Tibial artery (tissue), 4 donors: ENCODE measurements at regions of chr17 and their contacts with region 1.

Region 1: GRCh38 chr17:38799378-38800236 is at the start of gene PIP4K2B:
- DNase-seq: peak; percentile 96 to 99
- H3K4me3 ChIP-seq: peak within 1 kb of the TSS; percentile 95 to 97
- H3K27ac ChIP-seq: peak within 1 kb of the TSS; percentile 98
- H3K4me1 ChIP-seq: peaks cover 0 to 37% (median 31%) of the 10 kb centered on the region in 4 donors
- H3K27me3 ChIP-seq: no peaks in the 10 kb centered on the region
- CTCF ChIP-seq: no peak

Region 2: GRCh38 chr17:38711792-38712571 is 87.6 kb before region 1 on chr17:
- intact Hi-C with region 1: no loop called
- DNase-seq: no peak
- H3K4me3 ChIP-seq: no peak overlapping the region
- H3K27ac ChIP-seq: no peak overlapping the region
- H3K4me1 ChIP-seq: peaks cover 0 to 10% (median 6%) of the 10 kb centered on the region in 4 donors
- H3K27me3 ChIP-seq: no peaks in the 10 kb centered on the region
- CTCF ChIP-seq: no peak

Region 3: GRCh38 chr17:38752119-38752929 is 47.3 kb before region 1 on chr17 and contains the start of gene PSMB3:
- intact Hi-C with region 1: loop called (anchors 5 kb)
- DNase-seq: peak; percentile 99
- H3K4me3 ChIP-seq: peak within 1 kb of the TSS; percentile 73 to 96
- H3K27ac ChIP-seq: peak within 1 kb of the TSS; percentile 85 to 96
- H3K4me1 ChIP-seq: peaks cover 0 to 55% (median 40%) of the 10 kb centered on the region in 4 donors
- H3K27me3 ChIP-seq: no peaks in the 10 kb centered on the region
- CTCF ChIP-seq: no peak